Activated CD4-positive, alpha-beta memory T cell treated with anti-CD3 and anti-CD28 coated beads, Interleukin-2, amount 10 ng/mL, durations not matched to agents 7 days and 5 days (primary cell): ENCODE measurements at regions of chr2 and their contacts with region 1.

Region 1: GRCh38 chr2:69643602-69644505 is at the start of gene AAK1:
- DNase-seq: peak; percentile 88
- H3K4me3 Mint-ChIP-seq: peak within 1 kb of the TSS; percentile 88
- H3K27ac Mint-ChIP-seq: peak within 1 kb of the TSS; percentile 99
- H3K4me1 Mint-ChIP-seq: peaks cover 60% of the 10 kb centered on the region
- H3K27me3 Mint-ChIP-seq: no peaks in the 10 kb centered on the region
- total RNA-seq, gene AAK1: 115 to 121 TPM

Region 2: GRCh38 chr2:69565431-69565839 is 78.4 kb before region 1 on chr2:
- CTCF ChIA-PET with region 1: interaction called, 15 read pairs
- POLR2A ChIA-PET with region 1: interaction called, 12 read pairs
- DNase-seq: peak; percentile 70
- H3K4me3 Mint-ChIP-seq: no peak overlapping the region
- H3K27ac Mint-ChIP-seq: peak overlapping the region; percentile 37
- H3K4me1 Mint-ChIP-seq: peaks cover 42% of the 10 kb centered on the region
- H3K27me3 Mint-ChIP-seq: no peaks in the 10 kb centered on the region

Region 3: GRCh38 chr2:69616756-69617155 is 27.1 kb before region 1 on chr2:
- CTCF ChIA-PET with region 1: interaction called, 3 read pairs
- POLR2A ChIA-PET with region 1: interaction called, 39 read pairs
- DNase-seq: peak; percentile 61
- H3K4me3 Mint-ChIP-seq: no peak overlapping the region
- H3K27ac Mint-ChIP-seq: peak overlapping the region; percentile 4
- H3K4me1 Mint-ChIP-seq: peaks cover 38% of the 10 kb centered on the region
- H3K27me3 Mint-ChIP-seq: no peaks in the 10 kb centered on the region

Region 4: GRCh38 chr2:69674316-69674670 is 30.4 kb after region 1 on chr2:
- CTCF ChIA-PET with region 1: interaction called, 7 read pairs
- POLR2A ChIA-PET with region 1: interaction called, 24 read pairs
- DNase-seq: no peak
- H3K4me3 Mint-ChIP-seq: no peak overlapping the region
- H3K27ac Mint-ChIP-seq: no peak overlapping the region
- H3K4me1 Mint-ChIP-seq: peaks cover 40% of the 10 kb centered on the region
- H3K27me3 Mint-ChIP-seq: no peaks in the 10 kb centered on the region

Region 5: DNA sequence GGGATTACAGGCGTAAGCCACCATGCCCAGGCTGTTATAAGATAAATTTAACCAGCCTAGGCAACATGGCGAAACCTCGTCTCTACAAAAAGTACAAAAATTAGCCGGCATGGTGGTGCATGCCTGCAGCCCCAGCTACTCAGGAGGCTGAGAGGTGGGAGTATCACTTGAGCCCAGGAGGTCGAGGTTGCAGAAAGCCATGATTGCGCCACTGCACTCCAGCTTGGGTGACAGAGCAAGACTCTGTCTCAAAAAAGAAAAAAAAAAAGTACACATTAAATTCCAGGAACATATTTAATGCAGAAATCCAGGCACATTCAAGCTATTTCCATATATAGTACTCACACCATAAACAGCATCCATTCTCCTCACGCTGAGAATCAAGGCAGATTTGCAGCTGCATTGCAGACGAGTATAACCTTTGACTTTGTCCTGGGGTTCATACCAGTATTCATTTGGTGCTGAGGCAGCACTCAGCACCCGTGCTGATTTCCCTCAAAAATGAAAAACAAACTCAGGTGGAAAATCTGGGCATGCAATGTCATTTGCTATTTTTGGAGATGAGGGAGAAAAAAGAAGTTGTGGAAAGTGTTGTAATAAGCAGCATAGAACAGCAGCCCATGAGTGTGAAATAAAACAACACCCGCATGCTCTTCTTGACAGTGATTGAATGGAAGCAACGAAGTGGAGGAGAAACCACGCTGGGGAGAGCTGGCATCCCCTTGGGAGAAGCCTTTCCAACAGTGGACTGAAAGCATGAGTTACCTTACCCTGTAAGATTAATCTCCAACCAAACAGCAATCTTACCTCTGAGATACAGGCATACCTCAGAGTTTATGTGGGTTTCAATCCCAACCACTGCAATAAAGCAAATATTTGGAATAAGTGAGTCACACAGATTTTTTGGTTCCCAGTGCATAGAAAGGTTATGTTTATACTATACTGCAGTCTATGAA is 51.3 kb after region 1 on chr2:
- CTCF ChIA-PET with region 1: interaction called, 4 read pairs
- POLR2A ChIA-PET with region 1: interaction called, 26 read pairs
- DNase-seq: no peak
- H3K4me3 Mint-ChIP-seq: no peak overlapping the region
- H3K27ac Mint-ChIP-seq: no peak overlapping the region
- H3K4me1 Mint-ChIP-seq: peaks cover 57% of the 10 kb centered on the region
- H3K27me3 Mint-ChIP-seq: peaks cover 4% of the 10 kb centered on the region

Region 6: DNA sequence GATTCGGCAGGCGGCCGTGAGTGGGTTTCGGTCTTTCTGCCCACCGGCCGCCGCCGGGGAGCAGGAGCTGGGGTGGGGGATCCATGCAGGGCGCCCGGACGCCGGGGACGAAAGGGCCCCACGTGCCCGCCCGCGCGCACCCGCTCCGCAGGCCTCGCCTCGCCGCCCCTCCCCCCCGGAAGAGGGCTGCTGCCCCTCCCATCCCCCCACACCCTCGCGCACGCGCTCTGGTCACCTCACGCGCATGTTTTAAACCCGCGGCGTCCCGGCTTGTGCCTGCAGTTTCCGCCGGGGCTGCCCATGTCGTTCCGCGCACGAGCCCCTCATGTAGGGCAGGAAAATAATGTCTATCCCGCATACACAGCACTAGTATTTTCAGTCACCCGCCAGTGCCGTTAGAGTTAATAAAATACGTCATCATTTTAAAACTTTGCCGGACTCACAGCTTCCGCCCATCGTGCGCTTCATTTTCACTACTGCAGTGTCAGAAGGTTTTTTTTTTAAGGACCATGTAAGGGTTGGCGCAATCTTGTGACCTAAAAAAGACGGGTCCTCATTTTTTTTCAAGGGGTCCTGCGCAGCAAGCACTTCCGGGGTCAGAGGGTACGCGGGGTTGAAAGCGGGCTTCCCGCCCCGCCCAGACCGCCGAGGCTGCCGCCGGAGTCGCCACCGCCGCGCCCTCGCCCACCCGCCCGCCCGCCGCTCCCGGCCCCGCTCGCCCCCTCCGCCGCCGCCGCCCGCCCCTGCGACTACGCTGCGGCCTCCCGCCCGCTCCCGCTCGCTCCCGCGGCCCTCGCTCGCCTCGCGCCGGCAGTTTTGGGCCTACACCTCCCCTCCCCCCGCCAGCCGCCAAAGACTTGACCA is 443.2 kb after region 1 on chr2 and contains the start of gene PCBP1:
- CTCF ChIA-PET with region 1: no interaction called
- POLR2A ChIA-PET with region 1: interaction called, 10 read pairs
- DNase-seq: peak; percentile 95
- H3K4me3 Mint-ChIP-seq: peak within 1 kb of the TSS; percentile 98
- H3K27ac Mint-ChIP-seq: peak within 1 kb of the TSS; percentile 100
- H3K4me1 Mint-ChIP-seq: peaks cover 59% of the 10 kb centered on the region
- H3K27me3 Mint-ChIP-seq: no peaks in the 10 kb centered on the region
- total RNA-seq, gene PCBP1: 475 to 483 TPM